Activated CD8-positive, alpha-beta T cell treated with anti-CD3 and anti-CD28 coated beads for 36 hours (primary cell): ENCODE measurements at regions of chr14 and their contacts with region 1.

Region 1: GRCh38 chr14:69398053-69398817 is at the starts of genes ERH and SLC39A9:
- DNase-seq: peak; percentile 97
- ATAC-seq: peak; percentile 87
- H3K4me3 Mint-ChIP-seq: peak within 1 kb of the TSS; percentile 98
- H3K27ac Mint-ChIP-seq: peak within 1 kb of the TSS; percentile 100
- H3K4me1 Mint-ChIP-seq: peaks cover 61% of the 10 kb centered on the region
- H3K27me3 Mint-ChIP-seq: no peaks in the 10 kb centered on the region
- CTCF ChIP-seq: no peak
- total RNA-seq, gene ERH: 301 to 313 TPM
- total RNA-seq, gene SLC39A9: 39.2 to 41.3 TPM

Region 2: DNA sequence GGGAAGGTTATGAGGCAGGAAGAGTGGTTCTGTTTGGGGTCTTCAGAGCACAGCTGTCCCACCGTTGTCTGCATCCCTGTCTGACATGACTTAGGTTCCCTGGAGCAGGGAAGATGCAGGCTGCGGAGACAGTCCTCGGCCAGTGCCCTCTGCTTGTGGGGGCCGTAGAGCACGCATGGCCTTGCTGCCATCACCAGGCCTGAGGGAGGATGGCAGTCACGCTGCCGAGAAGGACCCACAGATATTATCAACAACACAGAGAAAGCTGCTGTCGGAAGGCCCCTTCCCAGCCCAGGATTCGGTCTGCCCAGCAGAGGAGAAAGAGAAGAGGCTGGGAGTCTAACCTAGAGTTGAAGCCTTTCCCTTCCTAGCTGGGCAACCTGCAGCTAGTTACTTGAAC is 35.2 kb before region 1 on chr14:
- CTCF ChIA-PET with region 1: interaction called, 3 read pairs
- POLR2A ChIA-PET with region 1: interaction called, 20 read pairs
- intact Hi-C with region 1: no loop called
- DNase-seq: no peak
- ATAC-seq: no peak
- H3K4me3 Mint-ChIP-seq: no peak overlapping the region
- H3K27ac Mint-ChIP-seq: no peak overlapping the region
- H3K4me1 Mint-ChIP-seq: peaks cover 21% of the 10 kb centered on the region
- H3K27me3 Mint-ChIP-seq: no peaks in the 10 kb centered on the region
- CTCF ChIP-seq: no peak

Region 3: GRCh38 chr14:69378274-69378673 is 20.0 kb before region 1 on chr14:
- CTCF ChIA-PET with region 1: no interaction called
- POLR2A ChIA-PET with region 1: interaction called, 24 read pairs
- intact Hi-C with region 1: no loop called
- DNase-seq: no peak
- ATAC-seq: no peak
- H3K4me3 Mint-ChIP-seq: no peak overlapping the region
- H3K27ac Mint-ChIP-seq: no peak overlapping the region
- H3K4me1 Mint-ChIP-seq: peaks cover 18% of the 10 kb centered on the region
- H3K27me3 Mint-ChIP-seq: no peaks in the 10 kb centered on the region
- CTCF ChIP-seq: no peak

Region 4: GRCh38 chr14:69387311-69387710 is 10.9 kb before region 1 on chr14:
- CTCF ChIA-PET with region 1: interaction called, 4 read pairs
- POLR2A ChIA-PET with region 1: interaction called, 24 read pairs
- intact Hi-C with region 1: no loop called
- DNase-seq: no peak
- ATAC-seq: no peak
- H3K4me3 Mint-ChIP-seq: no peak overlapping the region
- H3K27ac Mint-ChIP-seq: no peak overlapping the region
- H3K4me1 Mint-ChIP-seq: peaks cover 51% of the 10 kb centered on the region
- H3K27me3 Mint-ChIP-seq: no peaks in the 10 kb centered on the region
- CTCF ChIP-seq: no peak